Activated naive CD4-positive, alpha-beta T cell treated with anti-CD3 and anti-CD28 coated beads for 36 hours (primary cell): ENCODE measurements at regions of chr7 and their contacts with region 1.

Region 1: GRCh38 chr7:129218514-129219062 is 6.2 kb upstream of the AHCYL2 start:
- DNase-seq: peak; percentile 90
- H3K4me3 Mint-ChIP-seq: no peak overlapping the region
- H3K27ac Mint-ChIP-seq: no peak overlapping the region
- H3K4me1 Mint-ChIP-seq: peaks cover 17% of the 10 kb centered on the region
- H3K27me3 Mint-ChIP-seq: no peaks in the 10 kb centered on the region

Region 2: GRCh38 chr7:129231666-129232065 is 13.1 kb after region 1 on chr7:
- CTCF ChIA-PET with region 1: interaction called, 23 read pairs
- intact Hi-C with region 1: no loop called
- DNase-seq: no peak
- H3K4me3 Mint-ChIP-seq: no peak overlapping the region
- H3K27ac Mint-ChIP-seq: no peak overlapping the region
- H3K4me1 Mint-ChIP-seq: peaks cover 15% of the 10 kb centered on the region
- H3K27me3 Mint-ChIP-seq: no peaks in the 10 kb centered on the region

Region 3: DNA sequence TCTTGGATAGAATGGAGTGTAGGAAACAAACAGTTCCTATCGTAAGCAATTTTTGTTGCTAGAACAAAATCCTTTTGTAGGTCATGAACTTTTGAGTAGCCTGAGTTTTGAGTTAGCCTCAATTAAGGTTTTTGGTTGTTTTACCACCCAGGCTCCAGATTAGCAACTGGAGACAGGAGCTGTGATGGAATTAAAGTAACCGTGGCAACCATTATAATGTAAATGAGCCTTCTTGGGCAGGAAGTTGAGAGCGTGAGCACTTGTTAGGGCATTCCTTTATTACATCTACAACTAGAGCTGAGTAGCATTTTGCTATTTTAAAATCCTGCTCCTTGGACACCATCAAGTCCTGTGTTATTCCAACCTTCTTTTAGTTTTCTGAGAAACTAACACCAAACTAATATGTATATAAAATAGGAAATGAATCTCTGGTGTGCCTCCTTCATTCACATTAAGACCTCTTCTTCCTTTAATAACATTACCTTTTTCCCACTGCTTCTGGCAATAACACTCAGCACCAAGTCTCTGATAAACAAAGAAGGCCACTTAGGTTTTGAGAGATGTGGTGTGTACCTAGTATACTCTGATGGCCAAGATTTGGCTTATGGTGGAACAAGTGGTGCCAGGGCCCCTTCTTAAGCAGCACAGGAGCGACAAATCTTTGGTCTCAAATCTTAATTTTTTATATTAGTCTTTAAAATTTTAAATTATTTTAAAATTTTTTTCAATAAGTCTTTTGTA is 40.2 kb after region 1 on chr7:
- CTCF ChIA-PET with region 1: interaction called, 15 read pairs
- intact Hi-C with region 1: no loop called
- DNase-seq: no peak
- H3K4me3 Mint-ChIP-seq: no peak overlapping the region
- H3K27ac Mint-ChIP-seq: no peak overlapping the region
- H3K4me1 Mint-ChIP-seq: peaks cover 32% of the 10 kb centered on the region
- H3K27me3 Mint-ChIP-seq: no peaks in the 10 kb centered on the region

Region 4: GRCh38 chr7:129285111-129285510 is 66.5 kb after region 1 on chr7:
- CTCF ChIA-PET with region 1: interaction called, 18 read pairs
- intact Hi-C with region 1: no loop called
- DNase-seq: no peak
- H3K4me3 Mint-ChIP-seq: no peak overlapping the region
- H3K27ac Mint-ChIP-seq: no peak overlapping the region
- H3K4me1 Mint-ChIP-seq: no peaks in the 10 kb centered on the region
- H3K27me3 Mint-ChIP-seq: no peaks in the 10 kb centered on the region

Region 5: GRCh38 chr7:129376076-129376777 is 157.6 kb after region 1 on chr7:
- CTCF ChIA-PET with region 1: interaction called, 20 read pairs
- intact Hi-C with region 1: no loop called
- DNase-seq: peak; percentile 86
- H3K4me3 Mint-ChIP-seq: no peak overlapping the region
- H3K27ac Mint-ChIP-seq: no peak overlapping the region
- H3K4me1 Mint-ChIP-seq: peaks cover 49% of the 10 kb centered on the region
- H3K27me3 Mint-ChIP-seq: no peaks in the 10 kb centered on the region